ENCODE measurements at regions of chr18 and their contacts with region 1.

Region 1: GRCh38 chr18:4549164-4549860 is 94.2 kb upstream of the DLGAP1 start:
- DNase-seq: peak; percentile 30
- H3K4me3 ChIP-seq: no peak overlapping the region
- H3K27ac ChIP-seq: no peak overlapping the region
- H3K4me1 ChIP-seq: peaks cover 1% of the 10 kb centered on the region
- H3K27me3 ChIP-seq: no peaks in the 10 kb centered on the region
- CTCF ChIP-seq: no peak

Region 2: GRCh38 chr18:4582431-4583335 is 33.4 kb after region 1 on chr18:
- CTCF ChIA-PET with region 1: no interaction called
- POLR2A ChIA-PET with region 1: no interaction called
- intact Hi-C with region 1: loop called (anchors 1 kb)
- DNase-seq: no peak
- H3K4me3 ChIP-seq: no peak overlapping the region
- H3K27ac ChIP-seq: no peak overlapping the region
- H3K4me1 ChIP-seq: no peaks in the 10 kb centered on the region
- H3K27me3 ChIP-seq: no peaks in the 10 kb centered on the region
- CTCF ChIP-seq: no peak

Region 3: GRCh38 chr18:4704781-4705180 is 155.5 kb after region 1 on chr18:
- CTCF ChIA-PET with region 1: no interaction called
- POLR2A ChIA-PET with region 1: no interaction called
- intact Hi-C with region 1: no loop called
- DNase-seq: no peak
- H3K4me3 ChIP-seq: no peak overlapping the region
- H3K27ac ChIP-seq: no peak overlapping the region
- H3K4me1 ChIP-seq: no peaks in the 10 kb centered on the region
- H3K27me3 ChIP-seq: peaks cover 4% of the 10 kb centered on the region
- CTCF ChIP-seq: no peak

Region 4: GRCh38 chr18:4765401-4765800 is 216.1 kb after region 1 on chr18:
- CTCF ChIA-PET with region 1: no interaction called
- POLR2A ChIA-PET with region 1: no interaction called
- intact Hi-C with region 1: no loop called
- DNase-seq: no peak
- H3K4me3 ChIP-seq: no peak overlapping the region
- H3K27ac ChIP-seq: no peak overlapping the region
- H3K4me1 ChIP-seq: no peaks in the 10 kb centered on the region
- H3K27me3 ChIP-seq: peaks cover 8% of the 10 kb centered on the region
- CTCF ChIP-seq: peak; percentile 24; the same call in 1 of the 2 replicates

Measured in A673 (cell line).